Prostate gland (tissue), 2 donors: ENCODE measurements at regions of chr4 and their contacts with region 1.

Region 1: GRCh38 chr4:85979276-85979675 is 380.6 kb downstream of the MAPK10 start:
- DNase-seq: no peak
- H3K4me3 ChIP-seq: no peak overlapping the region
- H3K27ac ChIP-seq: no peak overlapping the region
- H3K4me1 ChIP-seq: no peaks in the 10 kb centered on the region
- H3K27me3 ChIP-seq: no peaks in the 10 kb centered on the region
- CTCF ChIP-seq: no peak
- POLR2A ChIP-seq: no peak

Region 2: GRCh38 chr4:86043755-86044592 is 64.7 kb after region 1 on chr4:
- intact Hi-C with region 1: loop called (anchors 10 kb)
- DNase-seq: peak; percentile 28
- H3K4me3 ChIP-seq: no peak overlapping the region
- H3K27ac ChIP-seq: no peak overlapping the region
- H3K4me1 ChIP-seq: no peaks in the 10 kb centered on the region
- H3K27me3 ChIP-seq: no peaks in the 10 kb centered on the region
- CTCF ChIP-seq: peak in 3 of 4 experiments; percentile 55 to 63 (median 59)
- POLR2A ChIP-seq: no peak

Region 3: GRCh38 chr4:86294883-86295282 is 315.6 kb after region 1 on chr4:
- intact Hi-C with region 1: no loop called
- DNase-seq: no peak
- H3K4me3 ChIP-seq: no peak overlapping the region
- H3K27ac ChIP-seq: no peak overlapping the region
- H3K4me1 ChIP-seq: no peaks in the 10 kb centered on the region
- H3K27me3 ChIP-seq: no peaks in the 10 kb centered on the region
- CTCF ChIP-seq: no peak
- POLR2A ChIP-seq: no peak

Region 4: GRCh38 chr4:86359944-86360478 is 380.7 kb after region 1 on chr4 and contains the start of gene MAPK10:
- intact Hi-C with region 1: no loop called
- DNase-seq: peak; percentile 54
- H3K4me3 ChIP-seq: peak within 1 kb of the TSS; percentile 5 to 22
- H3K27ac ChIP-seq: peak within 1 kb of the TSS in 1 of 2 donors; percentile 28
- H3K4me1 ChIP-seq: no peaks in the 10 kb centered on the region
- H3K27me3 ChIP-seq: no peaks in the 10 kb centered on the region
- CTCF ChIP-seq: no peak
- POLR2A ChIP-seq: peak; percentile 37
- total RNA-seq, gene MAPK10: 49.7 to 64.9 TPM